PC-9 (cell line): ENCODE measurements at regions of chr1 and their contacts with region 1.

Region 1: GRCh38 chr1:160997323-160998038 is 23.5 kb downstream of the F11R start:
- DNase-seq: peak; percentile 54 to 57
- H3K4me3 ChIP-seq: no peak overlapping the region
- H3K27ac ChIP-seq: peak overlapping the region; percentile 73
- H3K4me1 ChIP-seq: peaks cover 37% of the 10 kb centered on the region
- H3K27me3 ChIP-seq: no peaks in the 10 kb centered on the region
- CTCF ChIP-seq: peak; percentile 69

Region 2: GRCh38 chr1:160942926-160943325 is 54.6 kb before region 1 on chr1:
- CTCF ChIA-PET with region 1: no interaction called
- POLR2A ChIA-PET with region 1: no interaction called
- intact Hi-C with region 1: no loop called
- DNase-seq: no peak
- H3K4me3 ChIP-seq: no peak overlapping the region
- H3K27ac ChIP-seq: no peak overlapping the region
- H3K4me1 ChIP-seq: no peaks in the 10 kb centered on the region
- H3K27me3 ChIP-seq: peaks cover 34% of the 10 kb centered on the region
- CTCF ChIP-seq: no peak

Region 3: GRCh38 chr1:161021165-161021960 is 23.9 kb after region 1 on chr1:
- CTCF ChIA-PET with region 1: interaction called, 7 read pairs
- POLR2A ChIA-PET with region 1: no interaction called
- intact Hi-C with region 1: loop called (anchors 2 kb)
- DNase-seq: peak; percentile 99
- H3K4me3 ChIP-seq: peak overlapping the region; percentile 93
- H3K27ac ChIP-seq: peak overlapping the region; percentile 97
- H3K4me1 ChIP-seq: peaks cover 49% of the 10 kb centered on the region
- H3K27me3 ChIP-seq: no peaks in the 10 kb centered on the region
- CTCF ChIP-seq: no peak

Region 4: DNA sequence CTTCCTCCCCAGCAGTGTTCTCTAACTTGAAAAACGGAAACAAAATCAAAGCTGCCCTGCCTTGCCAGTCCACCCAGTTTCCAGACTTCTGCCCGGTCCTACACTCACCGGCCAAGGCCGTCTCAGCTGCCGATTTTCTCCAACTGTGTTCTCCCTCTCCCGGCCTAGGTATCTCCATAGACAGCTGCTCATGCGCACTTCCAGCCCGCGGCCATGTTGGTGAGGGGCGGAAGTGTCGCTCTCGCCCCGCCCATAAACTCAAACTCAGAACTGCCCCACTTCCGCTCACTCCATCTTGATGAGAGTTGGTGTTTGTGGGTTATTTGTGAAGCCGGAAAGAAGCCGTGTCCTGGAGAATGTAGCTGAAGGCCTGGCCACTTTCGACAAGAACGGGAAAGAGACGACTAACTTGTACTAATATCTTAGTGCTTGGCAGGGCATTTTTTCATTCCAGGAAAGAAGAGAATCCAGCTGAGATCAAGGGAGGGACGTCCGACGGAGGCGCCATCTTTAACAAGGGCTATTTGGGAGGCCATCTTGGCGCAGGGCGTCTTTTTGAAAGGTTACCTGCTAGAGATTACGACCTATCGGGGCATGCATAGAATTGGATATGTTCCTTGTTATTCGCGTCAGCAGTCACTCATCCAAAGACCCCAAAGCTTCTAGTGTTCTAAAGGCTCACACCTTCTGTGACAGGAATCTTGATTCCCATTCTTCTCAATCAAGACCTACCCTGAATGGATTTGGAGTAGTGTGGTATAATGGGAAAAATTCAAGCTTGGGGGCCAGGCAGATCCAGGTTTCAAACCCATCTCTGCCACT is 48.5 kb after region 1 on chr1 and contains the start of gene USF1:
- CTCF ChIA-PET with region 1: interaction called, 11 read pairs
- POLR2A ChIA-PET with region 1: interaction called, 5 read pairs
- intact Hi-C with region 1: loop called (anchors 2 kb)
- DNase-seq: peak; percentile 89 to 90
- H3K4me3 ChIP-seq: peak within 1 kb of the TSS; percentile 66
- H3K27ac ChIP-seq: peak within 1 kb of the TSS; percentile 85
- H3K4me1 ChIP-seq: peaks cover 15% of the 10 kb centered on the region
- H3K27me3 ChIP-seq: no peaks in the 10 kb centered on the region
- CTCF ChIP-seq: 0 out of 2 replicates have a peak, but pooled peaks have one; percentile 19
- total RNA-seq, gene USF1: 34.8 and 43.2 TPM in 2 replicates

Region 5: DNA sequence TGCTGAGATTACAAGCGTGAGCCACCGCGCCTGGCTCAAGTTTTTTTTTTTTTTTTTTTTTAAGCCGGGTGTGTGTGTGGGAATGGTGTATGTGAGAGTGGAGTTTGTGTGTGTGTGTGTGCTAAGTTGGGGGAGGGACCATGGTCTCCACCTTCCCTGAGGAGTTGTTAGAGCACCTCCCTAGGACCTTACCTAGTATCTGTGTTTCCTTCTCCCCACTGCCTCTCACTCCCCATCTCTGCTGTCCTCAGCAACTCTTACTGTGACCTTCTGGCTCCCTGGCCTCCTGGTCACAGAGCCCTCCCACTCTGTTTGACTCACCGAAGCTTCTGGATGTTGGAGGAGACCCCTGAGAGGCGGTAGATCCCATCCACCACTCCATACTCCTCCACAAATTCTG is 61.8 kb after region 1 on chr1:
- CTCF ChIA-PET with region 1: no interaction called
- POLR2A ChIA-PET with region 1: no interaction called
- intact Hi-C with region 1: no loop called
- DNase-seq: no peak
- H3K4me3 ChIP-seq: no peak overlapping the region
- H3K27ac ChIP-seq: no peak overlapping the region
- H3K4me1 ChIP-seq: no peaks in the 10 kb centered on the region
- H3K27me3 ChIP-seq: no peaks in the 10 kb centered on the region
- CTCF ChIP-seq: no peak

Region 6: DNA sequence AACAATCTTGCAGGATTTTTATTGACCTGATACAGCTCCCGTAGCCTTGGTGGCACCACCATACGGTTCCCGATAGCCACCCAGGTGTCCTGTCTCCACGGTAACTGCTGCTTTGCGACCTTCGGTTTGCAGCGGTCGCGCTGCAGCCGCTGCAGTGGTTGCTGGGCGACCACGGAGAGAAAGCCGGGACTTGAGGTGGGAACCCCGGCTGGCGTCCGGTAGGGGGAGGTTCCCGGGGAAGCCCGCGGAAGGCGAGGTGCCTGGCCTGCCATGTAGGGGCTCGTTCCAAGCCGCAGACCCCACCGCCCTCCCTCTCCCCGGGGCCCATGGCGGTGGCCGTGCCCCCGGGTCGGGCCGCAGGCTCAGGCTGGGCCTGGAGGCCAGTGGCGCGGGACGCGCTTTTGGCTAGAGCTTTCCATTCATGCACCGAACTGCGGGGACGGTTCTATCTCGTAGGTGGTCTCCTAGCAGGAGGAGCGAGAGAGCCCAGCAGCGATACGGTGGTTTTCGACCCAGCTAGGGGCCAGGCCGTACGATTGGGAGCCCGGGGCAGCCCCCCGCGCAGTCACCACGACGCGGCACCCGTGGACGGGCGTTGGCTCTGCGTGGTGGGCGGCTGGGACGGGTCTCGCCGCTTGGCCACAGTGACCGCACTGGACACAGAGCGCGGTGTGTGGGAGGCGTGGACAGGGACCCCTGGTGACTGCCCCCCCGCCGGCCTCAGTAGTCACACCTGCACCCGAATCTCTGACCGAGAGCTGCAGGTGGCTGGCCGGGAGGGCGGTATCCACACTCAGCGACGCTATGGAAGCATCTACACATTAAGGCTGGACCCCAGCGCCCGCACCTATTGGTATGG is 101.0 kb after region 1 on chr1 and contains the start of gene KLHDC9:
- CTCF ChIA-PET with region 1: interaction called, 5 read pairs
- POLR2A ChIA-PET with region 1: no interaction called
- intact Hi-C with region 1: loop called (anchors 1 kb)
- DNase-seq: peak; percentile 80 to 84
- H3K4me3 ChIP-seq: peak within 1 kb of the TSS; percentile 66
- H3K27ac ChIP-seq: no peak within 1 kb of the TSS
- H3K4me1 ChIP-seq: peaks cover 16% of the 10 kb centered on the region
- H3K27me3 ChIP-seq: no peaks in the 10 kb centered on the region
- CTCF ChIP-seq: no peak
- total RNA-seq, gene KLHDC9: 5.6 and 7.4 TPM in 2 replicates

Region 7: GRCh38 chr1:161132410-161133219 is 135.1 kb after region 1 on chr1 and contains the start of gene DEDD:
- CTCF ChIA-PET with region 1: no interaction called
- POLR2A ChIA-PET with region 1: interaction called, 5 read pairs
- intact Hi-C with region 1: loop called (anchors 10 kb)
- DNase-seq: peak; percentile 84 to 92
- H3K4me3 ChIP-seq: peak within 1 kb of the TSS; percentile 66
- H3K27ac ChIP-seq: peak within 1 kb of the TSS; percentile 91
- H3K4me1 ChIP-seq: peaks cover 33% of the 10 kb centered on the region
- H3K27me3 ChIP-seq: no peaks in the 10 kb centered on the region
- CTCF ChIP-seq: no peak
- total RNA-seq, gene DEDD: 26.7 and 29.8 TPM in 2 replicates

Region 8: DNA sequence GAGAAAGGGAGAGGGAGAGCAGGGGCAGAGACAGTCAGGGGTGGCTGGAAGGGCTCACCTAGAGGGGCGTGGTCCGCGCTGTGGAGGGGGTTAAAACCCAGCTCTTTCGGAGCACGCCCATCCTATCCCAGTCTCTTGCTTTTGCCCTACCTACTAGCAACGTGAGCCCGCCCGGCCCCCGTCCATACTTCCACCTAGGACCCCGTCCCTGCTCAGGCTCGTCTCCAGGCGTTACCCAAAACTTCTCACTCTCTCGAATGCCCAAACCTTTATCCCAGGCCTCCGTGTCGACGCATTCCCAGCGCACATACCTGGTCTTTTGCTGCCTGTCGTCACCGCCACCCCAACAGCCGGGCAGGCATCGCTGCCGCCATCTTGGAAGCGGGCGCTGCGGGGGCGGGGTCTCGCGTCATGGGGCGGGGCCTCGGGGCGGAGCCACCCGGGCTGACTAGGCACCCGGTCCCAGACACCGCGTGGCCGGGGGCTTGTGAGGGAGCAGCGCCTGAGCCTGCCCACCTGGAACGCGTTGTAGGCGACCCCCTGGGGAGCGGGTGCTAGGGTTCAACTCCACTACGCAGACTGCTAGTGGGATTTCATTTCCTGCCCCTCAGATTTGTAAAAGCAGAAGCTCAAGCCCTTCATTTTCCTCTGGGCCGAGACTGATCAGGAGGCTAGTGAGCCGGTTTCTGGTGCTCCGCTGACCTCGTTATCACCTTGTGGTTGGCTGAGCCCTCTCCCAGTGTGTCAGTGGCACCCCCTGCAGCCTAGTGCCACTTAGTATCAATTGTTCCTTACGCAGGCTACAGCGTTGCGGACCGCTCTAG is 179.8 kb after region 1 on chr1 and contains the start of gene B4GALT3:
- CTCF ChIA-PET with region 1: interaction called, 13 read pairs
- POLR2A ChIA-PET with region 1: no interaction called
- intact Hi-C with region 1: no loop called
- DNase-seq: peak; percentile 64 to 91
- H3K4me3 ChIP-seq: peak within 1 kb of the TSS; percentile 83
- H3K27ac ChIP-seq: peak within 1 kb of the TSS; percentile 61
- H3K4me1 ChIP-seq: peaks cover 19% of the 10 kb centered on the region
- H3K27me3 ChIP-seq: no peaks in the 10 kb centered on the region
- CTCF ChIP-seq: peak; percentile 49; the same call in 1 of the 2 replicates
- total RNA-seq, gene B4GALT3: 35.5 and 47.8 TPM in 2 replicates

Region 9: GRCh38 chr1:161238039-161238473 is 240.6 kb after region 1 on chr1 and contains the start of gene NR1I3:
- CTCF ChIA-PET with region 1: interaction called, 13 read pairs
- POLR2A ChIA-PET with region 1: no interaction called
- intact Hi-C with region 1: no loop called
- DNase-seq: no peak
- H3K4me3 ChIP-seq: no peak within 1 kb of the TSS
- H3K27ac ChIP-seq: no peak within 1 kb of the TSS
- H3K4me1 ChIP-seq: 0 out of 2 replicates have a peak, but pooled peaks cover 5% of the 10 kb centered on the region
- H3K27me3 ChIP-seq: no peaks in the 10 kb centered on the region
- CTCF ChIP-seq: no peak
- total RNA-seq, gene NR1I3: not detected in 2 replicates